Cardiac septum (tissue), 1 donor: ENCODE measurements at regions of chrX and their contacts with region 1.

Region 1: GRCh38 chrX:71998836-71999509 is 88.3 kb downstream of the NHSL2 start:
- DNase-seq: no peak

Region 2: GRCh38 chrX:71910986-71911730 is 87.8 kb before region 1 on chrX:
- intact Hi-C with region 1: loop called (anchors 5 kb)
- DNase-seq: no peak

Region 3: DNA sequence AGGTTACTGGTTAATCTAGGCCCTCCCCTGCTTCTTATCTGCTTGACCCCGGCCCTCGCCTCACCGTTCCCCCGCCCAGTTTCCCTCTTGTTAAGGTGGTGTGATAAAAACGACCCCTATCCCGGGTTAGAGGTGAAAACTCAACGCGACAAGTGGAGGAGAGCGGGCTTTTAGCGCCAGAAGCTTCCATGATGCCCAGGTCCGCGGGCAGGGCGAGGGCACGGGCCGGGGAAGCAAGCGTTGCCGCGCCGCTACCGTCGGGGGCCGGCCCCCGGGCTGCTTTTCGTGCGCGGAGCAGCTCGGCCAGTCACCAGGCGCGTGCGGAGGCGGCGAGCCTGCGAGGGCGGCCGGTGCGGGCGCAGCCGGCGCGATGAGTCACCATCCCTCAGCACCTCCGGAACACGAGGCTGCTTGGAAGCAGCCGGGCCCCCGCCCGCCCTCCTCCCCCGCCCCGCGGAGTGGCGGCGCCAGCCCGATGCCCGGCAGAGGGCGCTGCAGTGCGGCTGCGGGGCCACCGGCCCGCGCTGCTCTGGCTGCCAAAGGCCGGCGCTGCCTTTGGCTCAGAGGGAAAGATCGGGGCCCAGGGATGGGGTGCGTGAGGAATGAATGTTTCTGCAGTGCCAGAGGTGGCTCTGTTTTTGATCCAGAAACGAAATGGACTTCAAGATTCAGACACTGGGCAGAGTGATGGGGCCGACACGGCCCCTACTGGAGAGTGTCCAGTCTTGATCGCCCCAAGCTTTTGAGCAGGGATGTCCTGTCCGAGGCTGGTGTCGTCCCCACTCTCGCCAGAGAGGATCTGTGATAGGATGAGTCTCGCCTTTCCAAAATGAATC is 19.5 kb after region 1 on chrX:
- intact Hi-C with region 1: no loop called
- DNase-seq: peak; percentile 91